ENCODE measurements at regions of chr22 and their contacts with region 1.

Region 1: GRCh38 chr22:23893943-23894709 is at the start of gene MIF:
- DNase-seq: peak; percentile 82 to 98 (median 90)
- ATAC-seq: peak; percentile 86 to 92 (median 90)
- H3K4me3 ChIP-seq: peak within 1 kb of the TSS; percentile 77 to 92
- H3K4me3 Mint-ChIP-seq: peak within 1 kb of the TSS; percentile 91 to 92 (median 92)
- H3K27ac ChIP-seq: peak within 1 kb of the TSS; percentile 95
- H3K27ac Mint-ChIP-seq: peak within 1 kb of the TSS; percentile 95 to 97
- H3K4me1 ChIP-seq: peaks cover 4 to 32% of the 10 kb centered on the region in 2 experiments
- H3K4me1 Mint-ChIP-seq: peaks cover 20 to 33% (median 25%) of the 10 kb centered on the region in 3 donors
- H3K27me3 ChIP-seq: no peaks in the 10 kb centered on the region
- H3K27me3 Mint-ChIP-seq: no peaks in the 10 kb centered on the region
- total RNA-seq, gene MIF: 182 to 334 (median 289) TPM

Region 2: GRCh38 chr22:23857606-23858483 is 36.3 kb before region 1 on chr22 and contains the start of gene SLC2A11:
- CTCF ChIA-PET with region 1: interaction called, 5 to 15 read pairs
- POLR2A ChIA-PET with region 1: interaction called in 1 of 2 experiments, 3 read pairs
- DNase-seq: peak; percentile 78 to 97 (median 88)
- ATAC-seq: peak; percentile 86 to 93 (median 92)
- H3K4me3 ChIP-seq: peak within 1 kb of the TSS; percentile 67 to 95
- H3K4me3 Mint-ChIP-seq: peak within 1 kb of the TSS; percentile 90 to 96 (median 91)
- H3K27ac ChIP-seq: peak within 1 kb of the TSS; percentile 56
- H3K27ac Mint-ChIP-seq: peak within 1 kb of the TSS; percentile 86 to 91
- H3K4me1 ChIP-seq: peaks cover 13 to 26% of the 10 kb centered on the region in 2 experiments
- H3K4me1 Mint-ChIP-seq: peaks cover 20 to 35% (median 29%) of the 10 kb centered on the region in 3 donors
- H3K27me3 ChIP-seq: no peaks in the 10 kb centered on the region
- H3K27me3 Mint-ChIP-seq: no peaks in the 10 kb centered on the region
- total RNA-seq, gene SLC2A11: 16.2 to 24.2 (median 18.6) TPM

Region 3: GRCh38 chr22:23913661-23914353 is 19.7 kb after region 1 on chr22:
- CTCF ChIA-PET with region 1: interaction called in 1 of 2 experiments, 14 read pairs
- POLR2A ChIA-PET with region 1: interaction called in 1 of 2 experiments, 12 read pairs
- DNase-seq: peak; percentile 93 to 99 (median 98)
- ATAC-seq: peak; percentile 99 to 100 (median 99)
- H3K4me3 ChIP-seq: peak overlapping the region; percentile 75
- H3K4me3 Mint-ChIP-seq: peak overlapping the region; percentile 88 to 94 (median 93)
- H3K27ac ChIP-seq: peak overlapping the region; percentile 84
- H3K27ac Mint-ChIP-seq: peak overlapping the region; percentile 93 to 97
- H3K4me1 ChIP-seq: peaks cover 2 to 11% of the 10 kb centered on the region in 2 experiments
- H3K4me1 Mint-ChIP-seq: peaks cover 11 to 22% (median 16%) of the 10 kb centered on the region in 3 donors
- H3K27me3 ChIP-seq: no peaks in the 10 kb centered on the region
- H3K27me3 Mint-ChIP-seq: no peaks in the 10 kb centered on the region

Measured in T-cell (primary cell).